ENCODE measurements at regions of chr2 and their contacts with region 1.

Region 1: DNA sequence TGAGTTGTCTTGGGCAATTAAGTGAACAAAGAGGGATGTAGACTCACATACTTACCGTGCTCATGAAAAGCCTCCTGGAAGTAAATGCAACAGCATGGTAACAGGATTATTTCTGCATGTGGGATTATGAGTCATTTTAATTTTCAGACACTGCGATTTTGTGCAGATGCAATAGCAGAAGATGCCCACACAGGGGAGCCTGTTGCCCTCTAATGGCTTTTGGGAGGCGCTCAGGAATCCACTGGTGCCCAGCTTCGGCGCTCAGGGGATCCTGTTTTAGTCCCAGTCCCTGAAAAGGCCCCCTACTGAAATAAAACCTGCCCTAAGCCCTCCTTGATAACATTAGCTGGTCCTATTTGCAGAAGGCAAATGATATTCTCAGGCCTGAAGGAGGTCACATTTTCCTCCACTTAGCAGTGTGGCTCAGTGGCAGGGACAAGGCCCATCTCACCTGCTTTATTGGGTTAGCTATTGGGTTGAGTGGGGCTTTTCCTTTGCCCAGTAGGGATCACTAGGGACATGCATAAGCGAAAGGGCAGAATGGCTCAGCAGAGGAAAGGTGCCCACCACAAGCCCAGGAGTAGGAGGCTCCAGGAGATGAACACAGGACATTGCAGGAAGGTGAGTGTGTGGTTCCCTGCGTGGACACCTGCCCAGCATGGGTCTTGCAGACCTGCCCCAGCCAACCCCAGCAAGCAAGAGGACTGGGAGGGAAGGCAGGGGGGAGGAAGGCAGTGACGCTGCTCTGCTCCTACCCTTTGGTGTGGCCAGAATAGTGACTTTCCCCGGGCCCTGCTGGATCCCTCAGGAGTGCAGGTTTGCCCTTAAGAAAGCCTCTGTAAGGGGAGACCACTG is 26.5 kb upstream of the KCNS3 start:
- DNase-seq: peak in 1 of 2 donors; percentile 25
- H3K4me3 ChIP-seq: no peak overlapping the region
- CTCF ChIP-seq: peak in 1 of 3 donors; percentile 51
- POLR2A ChIP-seq: no peak

Region 2: GRCh38 chr2:15860760-15861159 is 1991.2 kb before region 1 on chr2:
- intact Hi-C with region 1: no loop called
- DNase-seq: no peak
- H3K4me3 ChIP-seq: no peak overlapping the region
- CTCF ChIP-seq: no peak
- POLR2A ChIP-seq: no peak

Region 3: GRCh38 chr2:18149645-18150246 is 297.8 kb after region 1 on chr2:
- intact Hi-C with region 1: loop called (anchors 10 kb)
- DNase-seq: no peak
- H3K4me3 ChIP-seq: no peak overlapping the region
- CTCF ChIP-seq: no peak
- POLR2A ChIP-seq: no peak

Region 4: DNA sequence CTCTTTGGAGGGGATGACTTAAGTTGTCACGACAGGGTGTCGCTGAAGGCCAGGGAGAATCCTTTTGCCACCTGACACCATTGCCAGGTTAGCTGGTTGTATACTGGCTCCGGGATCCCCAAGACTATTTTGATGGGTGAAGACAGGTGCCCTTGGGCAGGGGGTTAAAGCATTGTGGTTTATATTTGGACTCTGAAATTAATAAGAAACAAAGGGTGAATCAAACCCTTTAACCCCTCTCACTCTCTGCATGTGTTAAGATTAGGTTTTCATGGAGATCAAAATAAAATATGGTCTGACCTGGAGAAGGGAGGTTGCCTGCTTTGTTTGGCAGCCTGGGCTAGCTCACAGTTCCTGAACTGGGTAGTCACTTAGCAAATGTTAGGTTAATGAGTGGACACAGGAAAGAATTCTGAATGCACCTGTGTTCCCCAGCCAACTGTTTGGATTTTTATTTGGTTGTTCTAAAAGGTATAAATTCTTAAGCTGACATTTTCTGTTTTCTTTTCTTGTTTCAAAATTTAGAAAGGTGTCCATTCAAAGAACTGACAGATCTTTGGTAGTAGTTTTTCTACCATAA is 328.2 kb after region 1 on chr2:
- intact Hi-C with region 1: loop called (anchors 5 kb)
- DNase-seq: no peak
- H3K4me3 ChIP-seq: no peak overlapping the region
- CTCF ChIP-seq: no peak
- POLR2A ChIP-seq: no peak

Region 5: GRCh38 chr2:18387441-18388206 is 535.7 kb after region 1 on chr2:
- intact Hi-C with region 1: loop called (anchors 5 kb)
- DNase-seq: peak; percentile 77 to 96
- H3K4me3 ChIP-seq: no peak overlapping the region
- CTCF ChIP-seq: no peak
- POLR2A ChIP-seq: no peak

Measured in lower leg skin (tissue), 4 donors.